ENCODE measurements at regions of chr3 and their contacts with region 1.

Region 1: GRCh38 chr3:69306239-69307185 is 79.4 kb downstream of the FRMD4B start:
- DNase-seq: peak; percentile 63
- H3K4me3 ChIP-seq: peak overlapping the region in 1 of 2 experiments; percentile 28; a peak in 1 of 4 replicates
- H3K27ac ChIP-seq: no peak overlapping the region
- H3K4me1 ChIP-seq: no peaks in the 10 kb centered on the region
- H3K27me3 ChIP-seq: no peaks in the 10 kb centered on the region
- CTCF ChIP-seq: peak; percentile 93
- EP300 ChIP-seq: no peak
- RAD21 ChIP-seq: peak; percentile 98

Region 2: GRCh38 chr3:69174871-69175737 is 131.4 kb before region 1 on chr3:
- CTCF ChIA-PET with region 1: interaction called, 22 read pairs
- POLR2A ChIA-PET with region 1: no interaction called
- DNase-seq: no peak
- H3K4me3 ChIP-seq: no peak overlapping the region
- H3K27ac ChIP-seq: no peak overlapping the region
- H3K4me1 ChIP-seq: no peaks in the 10 kb centered on the region
- H3K27me3 ChIP-seq: no peaks in the 10 kb centered on the region
- CTCF ChIP-seq: no peak
- EP300 ChIP-seq: no peak
- RAD21 ChIP-seq: no peak

Region 3: DNA sequence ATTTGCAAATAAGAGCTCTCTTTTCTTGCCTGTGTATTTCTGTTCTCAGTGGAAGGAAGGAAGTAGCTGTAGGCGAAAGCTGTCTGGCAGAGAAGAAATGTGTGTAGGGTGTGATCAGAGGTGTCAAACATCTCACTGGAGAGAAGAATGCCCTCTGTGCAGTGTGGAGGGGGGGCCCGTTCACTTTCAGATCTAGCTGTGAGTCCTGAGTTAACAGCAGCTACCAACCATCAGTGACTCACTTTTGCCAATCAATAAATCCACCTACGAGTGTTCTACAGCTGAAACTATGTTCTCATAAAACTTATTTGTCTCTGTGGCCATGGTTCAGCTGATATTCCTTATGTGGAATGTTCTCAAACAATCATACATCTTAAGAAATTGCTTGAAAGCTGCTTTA is 24.3 kb before region 1 on chr3:
- CTCF ChIA-PET with region 1: interaction called, 13 read pairs
- POLR2A ChIA-PET with region 1: no interaction called
- DNase-seq: no peak
- H3K4me3 ChIP-seq: no peak overlapping the region
- H3K27ac ChIP-seq: no peak overlapping the region
- H3K4me1 ChIP-seq: no peaks in the 10 kb centered on the region
- H3K27me3 ChIP-seq: no peaks in the 10 kb centered on the region
- CTCF ChIP-seq: no peak
- EP300 ChIP-seq: no peak
- RAD21 ChIP-seq: no peak

Region 4: GRCh38 chr3:69294014-69294775 is 12.3 kb before region 1 on chr3:
- CTCF ChIA-PET with region 1: interaction called, 15 read pairs
- POLR2A ChIA-PET with region 1: no interaction called
- DNase-seq: no peak
- H3K4me3 ChIP-seq: no peak overlapping the region
- H3K27ac ChIP-seq: peak overlapping the region in 1 of 2 experiments; percentile 16; a peak in 1 of 4 replicates
- H3K4me1 ChIP-seq: peaks cover 0 to 30% of the 10 kb centered on the region in 2 experiments; a peak in 3 of 4 replicates
- H3K27me3 ChIP-seq: no peaks in the 10 kb centered on the region
- CTCF ChIP-seq: no peak
- EP300 ChIP-seq: no peak
- RAD21 ChIP-seq: no peak

Region 5: DNA sequence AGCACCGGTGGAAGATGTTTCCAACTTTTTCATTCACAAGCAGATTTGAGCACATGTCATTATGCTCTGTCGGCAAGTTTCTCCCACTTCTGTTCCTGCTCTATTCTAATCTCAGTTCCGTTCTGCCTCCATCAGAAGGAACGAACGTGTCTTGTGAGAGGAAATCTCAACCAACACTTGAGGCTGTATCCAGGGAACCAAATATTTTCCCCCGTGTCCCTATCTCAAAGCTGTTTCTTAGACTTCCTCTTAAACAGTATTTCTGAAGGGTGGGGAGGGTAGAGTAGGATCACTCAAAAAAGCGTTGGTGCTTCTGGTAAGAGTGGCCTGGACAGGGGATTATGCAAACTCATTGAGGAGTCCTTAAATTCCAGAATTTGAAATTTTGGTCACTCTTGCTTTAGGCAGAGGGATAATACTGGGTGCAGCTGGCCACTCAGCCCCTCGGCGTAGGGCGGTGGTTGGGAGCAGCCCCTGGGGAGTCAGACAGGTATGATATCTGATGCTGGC is 24.4 kb after region 1 on chr3:
- CTCF ChIA-PET with region 1: interaction called, 11 read pairs
- POLR2A ChIA-PET with region 1: no interaction called
- DNase-seq: no peak
- H3K4me3 ChIP-seq: no peak overlapping the region
- H3K27ac ChIP-seq: peak overlapping the region in 1 of 2 experiments; percentile 79; a peak in 2 of 4 replicates
- H3K4me1 ChIP-seq: peaks cover 0 to 17% of the 10 kb centered on the region in 2 experiments; a peak in 2 of 4 replicates
- H3K27me3 ChIP-seq: no peaks in the 10 kb centered on the region
- CTCF ChIP-seq: no peak
- EP300 ChIP-seq: no peak
- RAD21 ChIP-seq: no peak

Region 6: GRCh38 chr3:69353503-69353902 is 47.0 kb after region 1 on chr3:
- CTCF ChIA-PET with region 1: no interaction called
- POLR2A ChIA-PET with region 1: no interaction called
- DNase-seq: no peak
- H3K4me3 ChIP-seq: no peak overlapping the region
- H3K27ac ChIP-seq: peak overlapping the region in 1 of 2 experiments; percentile 76; a peak in 1 of 4 replicates
- H3K4me1 ChIP-seq: peaks cover 0 to 6% of the 10 kb centered on the region in 2 experiments; a peak in 3 of 4 replicates
- H3K27me3 ChIP-seq: no peaks in the 10 kb centered on the region
- CTCF ChIP-seq: no peak
- EP300 ChIP-seq: no peak
- RAD21 ChIP-seq: no peak

Region 7: GRCh38 chr3:69425261-69425660 is 118.7 kb after region 1 on chr3:
- CTCF ChIA-PET with region 1: interaction called, 88 read pairs
- POLR2A ChIA-PET with region 1: no interaction called
- DNase-seq: peak; percentile 29
- H3K4me3 ChIP-seq: no peak overlapping the region
- H3K27ac ChIP-seq: no peak overlapping the region
- H3K4me1 ChIP-seq: peaks cover 12 to 23% of the 10 kb centered on the region in 2 experiments; a peak in 3 of 4 replicates
- H3K27me3 ChIP-seq: no peaks in the 10 kb centered on the region
- CTCF ChIP-seq: peak; percentile 82
- EP300 ChIP-seq: no peak
- RAD21 ChIP-seq: peak; percentile 81

Region 8: GRCh38 chr3:69524816-69525215 is 218.3 kb after region 1 on chr3:
- CTCF ChIA-PET with region 1: no interaction called
- POLR2A ChIA-PET with region 1: no interaction called
- DNase-seq: no peak
- H3K4me3 ChIP-seq: no peak overlapping the region
- H3K27ac ChIP-seq: no peak overlapping the region
- H3K4me1 ChIP-seq: no peaks in the 10 kb centered on the region; a peak in 1 of 4 replicates
- H3K27me3 ChIP-seq: peaks cover 7% of the 10 kb centered on the region; the same call in 1 of the 2 replicates
- CTCF ChIP-seq: no peak
- EP300 ChIP-seq: no peak
- RAD21 ChIP-seq: no peak

Region 9: DNA sequence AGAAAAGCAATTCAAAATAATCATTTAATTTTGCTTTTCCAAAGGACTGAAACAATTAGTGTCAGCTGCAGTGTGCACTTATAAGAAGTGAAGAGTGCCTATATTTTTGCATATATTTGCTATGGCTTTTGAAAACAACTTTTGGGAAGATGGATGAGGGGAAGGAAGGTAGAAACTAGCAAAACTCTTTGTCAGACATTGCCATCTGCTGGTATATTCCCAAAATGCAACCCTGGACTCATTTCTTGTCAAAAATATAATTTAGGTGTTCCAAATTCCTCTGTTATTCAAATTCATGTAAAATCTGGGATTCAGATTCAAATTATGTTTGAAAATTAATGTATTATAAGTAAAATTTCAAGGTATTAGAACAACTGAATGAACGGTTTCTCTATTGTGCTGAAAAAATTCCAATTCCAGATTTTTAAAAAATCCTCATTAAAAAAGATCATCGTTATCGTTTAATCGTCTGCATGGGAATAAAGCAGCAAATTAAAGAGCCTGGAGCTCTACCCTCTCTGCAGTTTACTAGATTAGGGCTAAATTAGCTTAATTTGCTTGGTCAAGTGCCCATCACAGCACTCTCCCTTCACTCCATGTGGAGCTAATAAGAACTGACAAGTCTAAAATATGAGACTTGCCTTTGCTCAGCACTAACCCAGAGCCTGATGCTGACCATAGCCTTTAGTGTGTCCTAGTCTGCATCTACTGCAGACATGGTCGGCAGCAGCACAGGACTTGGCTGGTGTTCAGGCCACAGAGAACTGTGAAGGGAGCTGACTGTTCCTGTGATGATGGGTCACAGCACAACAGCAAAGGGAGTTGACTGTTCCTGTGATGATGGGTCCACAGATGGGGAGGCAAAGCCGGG is 364.8 kb after region 1 on chr3:
- CTCF ChIA-PET with region 1: interaction called, 41 read pairs
- POLR2A ChIA-PET with region 1: no interaction called
- DNase-seq: peak; percentile 68
- H3K4me3 ChIP-seq: no peak overlapping the region; a peak in 2 of 4 replicates
- H3K27ac ChIP-seq: peak overlapping the region in 1 of 2 experiments; percentile 83; a peak in 2 of 4 replicates
- H3K4me1 ChIP-seq: peaks cover 0 to 13% of the 10 kb centered on the region in 2 experiments; a peak in 2 of 4 replicates
- H3K27me3 ChIP-seq: no peaks in the 10 kb centered on the region
- CTCF ChIP-seq: peak; percentile 85
- EP300 ChIP-seq: peak in 1 of 2 experiments; percentile 91; a peak in 2 of 4 replicates
- RAD21 ChIP-seq: peak; percentile 91